SK-N-SH (cell line): ENCODE measurements at regions of chr17 and their contacts with region 1.

Region 1: GRCh38 chr17:17994271-17995069 is 21.8 kb downstream of the DRC3 start:
- DNase-seq: peak; percentile 86
- H3K4me3 ChIP-seq: no peak overlapping the region
- H3K27ac ChIP-seq: peak overlapping the region in 1 of 2 experiments; percentile 62; a peak in 1 of 4 replicates
- H3K4me1 ChIP-seq: peaks cover 4 to 26% of the 10 kb centered on the region in 2 experiments; a peak in 2 of 4 replicates
- H3K27me3 ChIP-seq: no peaks in the 10 kb centered on the region
- CTCF ChIP-seq: peak; percentile 53
- EP300 ChIP-seq: no peak
- RAD21 ChIP-seq: peak; percentile 68

Region 2: DNA sequence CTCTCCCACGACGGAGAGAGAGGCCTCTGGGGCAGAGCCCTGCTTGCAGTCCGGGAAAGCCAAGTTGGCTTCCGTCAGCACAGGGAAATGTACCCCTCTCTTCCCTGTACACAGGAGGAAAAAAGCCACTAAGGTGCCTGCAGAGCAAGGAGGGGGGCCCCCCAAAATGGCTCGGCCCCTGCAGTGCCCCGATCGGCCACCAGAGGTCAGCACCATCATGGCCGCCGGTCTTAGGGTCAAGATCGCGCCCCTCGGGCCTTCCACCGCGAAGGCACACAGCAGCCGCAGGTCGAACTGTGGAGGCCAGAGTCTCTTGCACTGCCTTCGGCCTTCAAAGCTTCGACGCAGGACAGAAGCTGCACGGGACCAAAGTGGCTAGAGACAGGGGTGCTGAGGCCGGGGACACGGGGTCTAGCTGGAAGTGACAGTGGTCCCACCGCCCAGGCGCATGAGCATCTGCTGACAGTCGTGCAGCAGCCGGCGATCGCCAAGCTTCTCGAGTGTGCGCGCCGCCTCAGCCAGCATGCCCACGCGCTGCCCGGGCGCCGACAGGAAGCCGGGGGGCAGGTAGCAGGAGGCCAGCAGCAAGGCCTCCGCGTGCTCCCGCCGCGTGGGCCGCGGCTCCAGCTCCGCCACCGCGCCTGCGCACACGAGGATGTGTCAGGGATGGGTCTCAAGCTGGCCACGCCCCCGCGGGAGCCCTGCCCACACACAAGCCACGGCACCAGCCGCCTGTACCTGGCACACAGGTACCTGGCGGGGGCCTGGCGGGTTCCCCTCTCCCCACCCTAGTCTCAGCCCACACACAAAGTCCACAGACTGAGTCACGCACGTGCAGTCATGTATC is 182.0 kb before region 1 on chr17:
- CTCF ChIA-PET with region 1: no interaction called
- POLR2A ChIA-PET with region 1: no interaction called
- DNase-seq: peak; percentile 95
- H3K4me3 ChIP-seq: peak overlapping the region in 1 of 2 experiments; percentile 30; a peak in 1 of 4 replicates
- H3K27ac ChIP-seq: peak overlapping the region in 1 of 2 experiments; percentile 62; a peak in 2 of 4 replicates
- H3K4me1 ChIP-seq: peaks cover 0 to 56% of the 10 kb centered on the region in 2 experiments; a peak in 3 of 4 replicates
- H3K27me3 ChIP-seq: no peaks in the 10 kb centered on the region
- CTCF ChIP-seq: peak; percentile 98
- EP300 ChIP-seq: no peak
- RAD21 ChIP-seq: peak; percentile 80

Region 3: GRCh38 chr17:18004884-18005305 is 10.4 kb after region 1 on chr17:
- CTCF ChIA-PET with region 1: interaction called, 18 read pairs
- POLR2A ChIA-PET with region 1: no interaction called
- DNase-seq: no peak
- H3K4me3 ChIP-seq: no peak overlapping the region
- H3K27ac ChIP-seq: no peak overlapping the region
- H3K4me1 ChIP-seq: peaks cover 11 to 30% of the 10 kb centered on the region in 2 experiments; a peak in 3 of 4 replicates
- H3K27me3 ChIP-seq: no peaks in the 10 kb centered on the region
- CTCF ChIP-seq: 0 out of 2 replicates have a peak, but pooled peaks have one; percentile 28
- EP300 ChIP-seq: no peak
- RAD21 ChIP-seq: no peak

Region 4: GRCh38 chr17:18025945-18026776 is 31.7 kb after region 1 on chr17:
- CTCF ChIA-PET with region 1: interaction called, 40 read pairs
- POLR2A ChIA-PET with region 1: no interaction called
- DNase-seq: peak; percentile 68
- H3K4me3 ChIP-seq: no peak overlapping the region
- H3K27ac ChIP-seq: peak overlapping the region in 1 of 2 experiments; percentile 88; a peak in 2 of 4 replicates
- H3K4me1 ChIP-seq: peaks cover 9 to 41% of the 10 kb centered on the region in 2 experiments; a peak in 3 of 4 replicates
- H3K27me3 ChIP-seq: no peaks in the 10 kb centered on the region
- CTCF ChIP-seq: no peak
- EP300 ChIP-seq: peak in 1 of 2 experiments; percentile 69; a peak in 2 of 4 replicates
- RAD21 ChIP-seq: peak; percentile 27; the same call in 1 of the 2 replicates

Region 5: DNA sequence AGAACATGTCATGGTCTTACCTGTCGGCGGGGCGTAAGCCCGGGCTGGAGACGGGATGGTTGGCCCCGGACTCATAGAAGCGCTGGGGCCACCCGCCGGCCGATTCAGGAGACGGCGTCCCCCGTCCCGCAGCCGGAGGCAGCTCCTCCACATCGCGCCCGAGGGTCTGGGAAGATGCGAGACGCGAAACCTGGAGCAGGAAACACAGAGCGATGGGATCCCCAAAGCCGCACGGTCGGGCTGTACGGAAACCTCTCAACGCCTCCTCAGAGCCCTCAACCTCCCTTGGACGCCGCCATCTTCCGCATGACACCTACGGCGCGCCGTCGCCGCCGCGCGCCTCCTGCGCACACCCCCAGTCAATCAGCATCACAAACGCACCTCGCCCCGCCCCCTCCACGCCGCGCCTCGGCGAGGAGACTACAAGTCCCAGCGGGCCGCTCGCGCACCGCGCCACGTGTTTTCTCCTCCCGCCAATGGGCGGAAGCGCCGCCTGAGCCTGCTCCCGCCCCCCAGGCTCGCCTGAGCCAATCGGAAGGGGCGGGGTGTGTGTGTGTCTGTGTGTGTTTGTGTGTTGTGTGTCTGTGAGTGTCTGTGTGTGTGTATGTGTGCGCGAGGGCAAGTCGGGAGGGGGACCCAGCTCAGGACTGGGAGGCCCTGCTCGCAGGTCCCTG is 44.5 kb after region 1 on chr17 and contains the starts of genes ATPAF2 and GID4:
- CTCF ChIA-PET with region 1: interaction called, 34 read pairs
- POLR2A ChIA-PET with region 1: no interaction called
- DNase-seq: peak; percentile 99
- H3K4me3 ChIP-seq: peak within 1 kb of the TSS; percentile 82 to 83
- H3K27ac ChIP-seq: peak within 1 kb of the TSS; percentile 36 to 83; a peak in 3 of 4 replicates
- H3K4me1 ChIP-seq: peaks cover 0 to 27% of the 10 kb centered on the region in 2 experiments; a peak in 2 of 4 replicates
- H3K27me3 ChIP-seq: no peaks in the 10 kb centered on the region
- CTCF ChIP-seq: peak; percentile 22; the same call in 1 of the 2 replicates
- EP300 ChIP-seq: no peak
- RAD21 ChIP-seq: no peak
- polyA plus RNA-seq, gene ATPAF2: 17.0 and 20.8 TPM in 2 replicates
- polyA plus RNA-seq, gene GID4: 4.3 and 4.4 TPM in 2 replicates